OCI-LY7 (cell line): ENCODE measurements at regions of chr6 and their contacts with region 1.

Region 1: DNA sequence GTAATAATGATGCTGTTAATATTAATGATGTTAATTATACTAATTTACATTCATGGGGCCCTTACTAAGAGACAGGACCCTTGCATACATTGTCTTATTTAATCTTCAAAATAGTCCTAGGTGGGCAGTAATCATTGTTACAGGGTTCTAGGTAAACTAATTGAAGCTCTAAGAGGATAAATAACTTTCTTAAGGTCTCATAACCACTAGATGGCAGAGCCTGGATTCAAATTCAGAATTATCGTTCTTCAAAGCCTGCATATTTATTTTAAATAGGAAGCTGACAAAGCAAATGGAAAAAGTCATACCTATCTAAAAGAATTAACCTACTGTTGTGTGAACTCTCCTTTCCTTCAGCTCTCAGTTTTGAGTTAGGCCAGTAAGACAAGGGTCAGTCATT is 23.5 kb downstream of the PTCHD4 start:
- DNase-seq: peak; percentile 7
- H3K4me3 ChIP-seq: no peak overlapping the region
- H3K27ac ChIP-seq: no peak overlapping the region
- H3K4me1 ChIP-seq: no peaks in the 10 kb centered on the region
- CTCF ChIP-seq: peak; percentile 69

Region 2: DNA sequence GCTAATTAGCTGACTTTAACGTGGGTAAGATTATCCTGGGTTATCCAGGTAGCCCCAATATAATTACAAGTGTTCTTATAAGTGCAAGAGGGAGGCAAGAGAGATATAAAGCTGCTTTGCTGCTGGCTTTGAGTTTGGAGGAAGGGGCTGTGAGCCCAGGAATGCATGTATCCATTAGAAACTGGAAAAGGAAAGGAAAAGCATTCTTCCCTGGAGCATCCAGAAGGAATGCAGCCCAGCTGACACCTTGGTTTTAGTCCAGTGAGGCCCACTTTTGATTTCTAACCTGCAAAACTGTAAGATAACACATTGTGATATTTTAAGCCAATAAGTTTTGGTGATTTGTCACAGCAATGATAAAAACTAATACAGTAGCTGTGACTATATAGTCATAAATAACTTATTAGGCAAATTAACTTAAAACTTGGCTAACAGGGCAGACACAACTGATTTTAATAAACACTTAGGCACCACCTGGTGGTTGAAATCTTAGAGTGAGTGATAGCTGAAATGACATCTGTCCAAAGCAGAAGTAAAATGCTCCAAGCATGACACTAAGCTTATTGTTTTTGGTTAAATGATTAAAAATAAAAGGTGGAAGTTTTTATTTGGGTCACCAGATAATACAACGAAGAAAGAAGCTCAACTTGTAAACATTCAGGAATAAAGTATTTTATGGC is 353.4 kb before region 1 on chr6:
- CTCF ChIA-PET with region 1: no interaction called
- POLR2A ChIA-PET with region 1: no interaction called
- intact Hi-C with region 1: no loop called
- DNase-seq: peak; percentile 56
- H3K4me3 ChIP-seq: no peak overlapping the region
- H3K27ac ChIP-seq: no peak overlapping the region
- H3K4me1 ChIP-seq: no peaks in the 10 kb centered on the region
- CTCF ChIP-seq: peak; percentile 79

Region 3: DNA sequence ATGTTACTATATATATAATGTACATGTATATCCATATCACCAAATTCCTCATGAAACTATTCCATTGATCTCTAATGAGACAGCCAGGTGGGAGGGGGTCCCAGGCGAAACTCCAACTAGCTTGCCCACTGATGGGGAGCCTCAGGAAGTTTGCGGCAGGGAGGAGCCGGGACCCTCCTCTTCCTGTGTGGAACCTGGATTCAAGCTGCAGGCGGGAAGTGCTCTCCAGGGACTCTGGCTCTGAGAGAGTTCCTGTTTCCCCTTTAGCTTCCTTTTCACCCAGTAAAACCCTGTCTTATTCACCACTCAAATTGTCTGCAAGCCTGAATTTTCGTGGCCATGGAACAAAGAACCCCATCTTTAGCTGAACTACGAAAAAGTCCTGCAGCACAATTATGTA is 153.4 kb before region 1 on chr6:
- CTCF ChIA-PET with region 1: no interaction called
- POLR2A ChIA-PET with region 1: no interaction called
- intact Hi-C with region 1: no loop called
- DNase-seq: no peak
- H3K4me3 ChIP-seq: no peak overlapping the region
- H3K27ac ChIP-seq: no peak overlapping the region
- H3K4me1 ChIP-seq: no peaks in the 10 kb centered on the region
- CTCF ChIP-seq: no peak

Region 4: GRCh38 chr6:48765352-48765961 is 678.0 kb after region 1 on chr6:
- CTCF ChIA-PET with region 1: no interaction called
- POLR2A ChIA-PET with region 1: no interaction called
- intact Hi-C with region 1: loop called (anchors 10 kb)
- DNase-seq: peak; percentile 31
- H3K4me3 ChIP-seq: no peak overlapping the region
- H3K27ac ChIP-seq: no peak overlapping the region
- H3K4me1 ChIP-seq: no peaks in the 10 kb centered on the region
- CTCF ChIP-seq: peak; percentile 73